ENCODE measurements at regions of chr5 and their contacts with region 1.

Region 1: GRCh38 chr5:170225326-170226128 is 7.3 kb upstream of the C5orf58 start:
- DNase-seq: peak; percentile 71
- CTCF ChIP-seq: peak; percentile 72

Region 2: DNA sequence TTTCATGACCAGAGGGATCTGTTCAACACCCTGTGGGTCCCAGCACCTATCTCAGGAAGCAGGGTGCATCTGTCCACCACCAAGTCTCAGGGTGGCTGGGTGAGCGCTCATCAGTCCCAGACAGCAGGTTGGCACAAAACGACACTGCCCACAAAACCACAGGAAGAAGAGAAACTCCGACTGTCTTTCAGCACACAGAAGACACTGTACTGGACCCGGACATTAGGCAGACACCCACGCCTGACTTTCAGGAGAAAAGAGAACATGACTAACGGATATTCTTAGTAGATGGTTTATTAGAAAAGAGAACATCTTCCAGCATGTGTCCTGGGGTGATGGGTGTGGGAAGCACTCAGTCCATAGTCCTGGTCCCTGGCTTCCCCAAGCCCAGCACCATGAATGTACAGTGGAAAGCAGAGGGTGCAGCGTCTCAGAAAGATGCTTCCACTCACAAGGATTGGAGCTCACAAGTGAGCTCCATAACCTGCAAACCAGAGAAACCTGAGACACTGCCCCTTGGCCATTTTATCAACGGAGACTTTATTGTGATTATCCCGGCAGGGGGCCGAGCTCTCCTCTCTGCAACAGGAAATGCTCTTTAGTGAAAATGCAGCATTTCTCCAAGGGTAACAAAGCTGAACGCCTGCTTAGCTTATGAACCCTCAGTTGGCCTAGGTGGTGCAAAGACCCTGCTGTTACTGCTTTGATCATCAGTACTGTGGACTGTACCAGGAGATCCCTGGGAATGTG is 107.8 kb after region 1 on chr5:
- CTCF ChIA-PET with region 1: interaction called, 31 read pairs
- POLR2A ChIA-PET with region 1: no interaction called
- DNase-seq: no peak
- CTCF ChIP-seq: no peak

Region 3: GRCh38 chr5:170404402-170404801 is 178.9 kb after region 1 on chr5:
- CTCF ChIA-PET with region 1: interaction called, 11 read pairs
- POLR2A ChIA-PET with region 1: no interaction called
- DNase-seq: no peak
- CTCF ChIP-seq: no peak

Region 4: GRCh38 chr5:170420780-170421412 is 195.4 kb after region 1 on chr5:
- CTCF ChIA-PET with region 1: interaction called, 191 read pairs
- POLR2A ChIA-PET with region 1: no interaction called
- DNase-seq: peak; percentile 74
- CTCF ChIP-seq: peak; percentile 51

Region 5: GRCh38 chr5:170491479-170491878 is 266.0 kb after region 1 on chr5:
- CTCF ChIA-PET with region 1: no interaction called
- POLR2A ChIA-PET with region 1: no interaction called
- DNase-seq: no peak
- CTCF ChIP-seq: no peak

Region 6: DNA sequence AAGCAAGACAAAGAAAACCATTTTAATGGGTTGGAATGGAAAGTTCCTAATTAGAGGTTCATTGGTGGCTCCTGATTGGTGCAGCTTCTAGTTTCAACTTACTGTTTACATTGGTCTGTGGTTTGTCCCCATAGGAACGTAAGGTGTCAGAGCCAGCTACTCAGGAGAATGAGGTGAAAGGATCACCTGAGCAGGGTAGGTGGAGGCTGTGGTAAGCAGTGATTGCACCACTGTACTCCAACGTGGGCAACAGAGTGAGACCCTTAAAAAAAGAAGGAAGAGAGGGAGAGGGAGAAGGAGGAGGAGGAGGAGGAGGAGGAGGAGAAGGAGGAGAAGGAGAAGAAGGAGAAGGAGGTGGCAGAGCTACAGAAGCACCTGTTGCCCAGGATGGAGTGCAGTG is 308.6 kb after region 1 on chr5:
- CTCF ChIA-PET with region 1: no interaction called
- POLR2A ChIA-PET with region 1: no interaction called
- DNase-seq: no peak
- CTCF ChIP-seq: no peak

Region 7: DNA sequence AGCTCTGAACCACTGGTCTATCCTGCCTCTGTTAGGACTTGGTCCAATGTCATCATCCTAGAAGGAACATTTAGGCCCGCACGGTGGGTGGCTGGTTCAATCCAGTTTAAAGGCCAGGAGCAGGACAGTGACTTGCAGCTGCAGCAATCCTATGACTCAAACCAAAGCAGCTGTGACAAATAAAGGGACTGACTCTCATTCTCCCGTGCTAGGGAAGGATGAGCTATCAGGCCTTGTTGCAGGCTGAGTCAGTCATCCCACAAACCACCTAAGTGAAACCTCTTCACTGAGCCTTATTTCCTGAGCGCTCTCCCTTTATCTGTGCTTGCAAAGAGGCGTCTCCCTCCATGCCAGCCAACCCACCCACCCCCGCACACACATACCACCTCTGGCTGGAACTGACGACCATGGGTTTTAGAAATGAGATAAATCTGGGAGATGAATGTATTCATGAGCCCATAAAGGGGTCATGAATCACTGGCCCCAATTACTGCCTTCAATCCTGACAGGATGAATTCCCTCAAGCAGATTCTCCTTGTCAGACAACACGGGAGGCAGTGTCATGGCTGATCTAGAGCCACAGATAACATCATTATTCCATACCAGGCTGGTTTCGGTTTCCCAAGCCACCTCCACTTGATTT is 371.7 kb after region 1 on chr5:
- CTCF ChIA-PET with region 1: no interaction called
- POLR2A ChIA-PET with region 1: no interaction called
- DNase-seq: no peak
- CTCF ChIP-seq: no peak

Measured in GM10248 (cell line).